IMR-90 (cell line): ENCODE measurements at regions of chr7 and their contacts with region 1.

Region 1: GRCh38 chr7:22559829-22560489 is 60.0 kb upstream of the STEAP1B start:
- DNase-seq: peak; percentile 86
- ATAC-seq: peak; percentile 47
- H3K4me3 ChIP-seq: no peak overlapping the region
- H3K27ac ChIP-seq: peak overlapping the region; percentile 90; the same call in 1 of the 2 replicates
- H3K4me1 ChIP-seq: peaks cover 31% of the 10 kb centered on the region
- H3K27me3 ChIP-seq: no peaks in the 10 kb centered on the region; the same call in 1 of the 2 replicates
- CTCF ChIP-seq: peak; percentile 99
- POLR2A ChIP-seq: no peak
- RAD21 ChIP-seq: peak; percentile 99

Region 2: DNA sequence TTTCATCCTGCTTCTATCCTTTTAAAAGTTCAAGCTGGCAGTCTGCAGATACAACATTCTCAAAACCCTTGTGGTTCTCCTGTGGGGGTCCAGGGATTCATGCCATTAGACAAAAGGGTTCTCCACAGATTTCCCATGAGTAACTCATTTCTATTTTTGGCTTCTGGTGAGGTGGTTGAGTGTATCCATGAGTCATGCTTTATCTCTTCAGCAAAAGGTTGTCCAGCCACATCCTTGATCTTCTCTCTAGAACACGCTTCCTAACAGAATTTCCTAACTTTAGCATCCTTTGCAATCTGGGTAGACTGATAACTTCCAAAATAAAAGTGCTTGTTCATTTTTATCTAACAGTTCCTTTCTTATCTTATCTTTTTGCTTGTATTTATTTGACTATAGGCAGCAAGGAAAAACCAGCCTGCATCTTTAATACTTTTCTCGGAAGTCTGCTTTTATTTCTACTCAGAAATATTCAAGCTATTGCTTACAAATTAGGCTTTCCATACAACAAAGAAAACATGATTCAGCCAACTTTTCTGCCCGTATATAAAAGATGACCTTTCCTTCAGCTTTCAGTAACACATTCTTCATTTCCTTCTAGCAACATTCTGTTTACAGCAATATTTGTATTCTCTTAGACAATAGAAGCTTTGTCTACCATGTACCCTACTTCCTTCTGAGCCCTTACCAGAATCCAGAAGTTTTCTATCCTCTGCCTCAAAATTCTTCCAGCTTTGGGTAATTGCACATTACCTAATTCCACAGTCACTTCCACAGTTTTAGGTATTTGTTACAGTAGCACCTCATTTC is 87.7 kb after region 1 on chr7:
- CTCF ChIA-PET with region 1: interaction called, 3 read pairs
- POLR2A ChIA-PET with region 1: no interaction called
- dilution Hi-C with region 1: no loop called
- in situ Hi-C with region 1: no loop called
- intact Hi-C with region 1: loop called (anchors 5 kb)
- DNase-seq: peak; percentile 98
- ATAC-seq: peak; percentile 67
- H3K4me3 ChIP-seq: no peak overlapping the region
- H3K27ac ChIP-seq: no peak overlapping the region
- H3K4me1 ChIP-seq: peaks cover 5% of the 10 kb centered on the region; the same call in 1 of the 2 replicates
- H3K27me3 ChIP-seq: no peaks in the 10 kb centered on the region
- CTCF ChIP-seq: no peak
- POLR2A ChIP-seq: peak; percentile 33; the same call in 1 of the 2 replicates
- RAD21 ChIP-seq: peak; percentile 32; the same call in 1 of the 2 replicates

Region 3: GRCh38 chr7:22726345-22727185 is 166.6 kb after region 1 on chr7:
- CTCF ChIA-PET with region 1: interaction called, 37 read pairs
- POLR2A ChIA-PET with region 1: interaction called, 38 read pairs
- dilution Hi-C with region 1: no loop called
- in situ Hi-C with region 1: loop called (anchors 5 kb)
- intact Hi-C with region 1: loop called (anchors 1 kb)
- DNase-seq: peak; percentile 97
- ATAC-seq: peak; percentile 63
- H3K4me3 ChIP-seq: peak overlapping the region; percentile 69
- H3K27ac ChIP-seq: peak overlapping the region; percentile 97
- H3K4me1 ChIP-seq: peaks cover 23% of the 10 kb centered on the region
- H3K27me3 ChIP-seq: no peaks in the 10 kb centered on the region
- CTCF ChIP-seq: peak; percentile 73
- POLR2A ChIP-seq: no peak
- RAD21 ChIP-seq: peak; percentile 93

Region 4: GRCh38 chr7:22822486-22823141 is 262.7 kb after region 1 on chr7 and contains the start of gene TOMM7:
- CTCF ChIA-PET with region 1: interaction called, 7 read pairs
- POLR2A ChIA-PET with region 1: interaction called, 3 read pairs
- dilution Hi-C with region 1: no loop called
- in situ Hi-C with region 1: no loop called
- intact Hi-C with region 1: loop called (anchors 1 kb)
- DNase-seq: peak; percentile 97
- ATAC-seq: peak; percentile 93
- H3K4me3 ChIP-seq: peak within 1 kb of the TSS; percentile 82
- H3K27ac ChIP-seq: peak within 1 kb of the TSS; percentile 88
- H3K4me1 ChIP-seq: peaks cover 5% of the 10 kb centered on the region
- H3K27me3 ChIP-seq: no peaks in the 10 kb centered on the region
- CTCF ChIP-seq: peak; percentile 53
- POLR2A ChIP-seq: peak; percentile 86
- RAD21 ChIP-seq: peak; percentile 52
- total RNA-seq, gene TOMM7: 67.2 and 125 TPM in 2 replicates

Region 5: GRCh38 chr7:22867003-22867402 is 307.0 kb after region 1 on chr7:
- CTCF ChIA-PET with region 1: no interaction called
- POLR2A ChIA-PET with region 1: interaction called, 10 read pairs
- dilution Hi-C with region 1: no loop called
- in situ Hi-C with region 1: no loop called
- intact Hi-C with region 1: no loop called
- DNase-seq: peak; percentile 89
- ATAC-seq: peak; percentile 47
- H3K4me3 ChIP-seq: no peak overlapping the region
- H3K27ac ChIP-seq: peak overlapping the region; percentile 100; the same call in 1 of the 2 replicates
- H3K4me1 ChIP-seq: peaks cover 25% of the 10 kb centered on the region
- H3K27me3 ChIP-seq: no peaks in the 10 kb centered on the region
- CTCF ChIP-seq: no peak
- POLR2A ChIP-seq: no peak
- RAD21 ChIP-seq: no peak

Region 6: GRCh38 chr7:23055582-23056178 is 495.7 kb after region 1 on chr7:
- CTCF ChIA-PET with region 1: interaction called, 18 read pairs
- POLR2A ChIA-PET with region 1: no interaction called
- dilution Hi-C with region 1: loop called (anchors 25 kb)
- in situ Hi-C with region 1: loop called (anchors 5 kb)
- intact Hi-C with region 1: loop called (anchors 1 kb)
- DNase-seq: peak; percentile 77
- ATAC-seq: peak; percentile 94
- H3K4me3 ChIP-seq: no peak overlapping the region
- H3K27ac ChIP-seq: no peak overlapping the region
- H3K4me1 ChIP-seq: no peaks in the 10 kb centered on the region
- H3K27me3 ChIP-seq: no peaks in the 10 kb centered on the region
- CTCF ChIP-seq: peak; percentile 94
- POLR2A ChIP-seq: peak; percentile 45; the same call in 1 of the 2 replicates
- RAD21 ChIP-seq: peak; percentile 98